CD4-positive, alpha-beta T cell (primary cell): ENCODE measurements at regions of chr2 and their contacts with region 1.

Region 1: GRCh38 chr2:241865957-241866789 is 3.4 kb upstream of the RTP5 start:
- DNase-seq: peak in 1 of 14 experiments; percentile 51
- ATAC-seq: no peak
- H3K4me3 ChIP-seq: no peak overlapping the region
- H3K4me3 Mint-ChIP-seq: no peak overlapping the region
- H3K27ac ChIP-seq: no peak overlapping the region
- H3K27ac Mint-ChIP-seq: no peak overlapping the region
- H3K4me1 ChIP-seq: peaks cover 93% of the 10 kb centered on the region
- H3K4me1 Mint-ChIP-seq: peaks cover 67% of the 10 kb centered on the region
- H3K27me3 ChIP-seq: peaks cover 0 to 6% of the 10 kb centered on the region in 2 experiments
- H3K27me3 Mint-ChIP-seq: peaks cover 37% of the 10 kb centered on the region
- CTCF ChIP-seq: no peak

Region 2: DNA sequence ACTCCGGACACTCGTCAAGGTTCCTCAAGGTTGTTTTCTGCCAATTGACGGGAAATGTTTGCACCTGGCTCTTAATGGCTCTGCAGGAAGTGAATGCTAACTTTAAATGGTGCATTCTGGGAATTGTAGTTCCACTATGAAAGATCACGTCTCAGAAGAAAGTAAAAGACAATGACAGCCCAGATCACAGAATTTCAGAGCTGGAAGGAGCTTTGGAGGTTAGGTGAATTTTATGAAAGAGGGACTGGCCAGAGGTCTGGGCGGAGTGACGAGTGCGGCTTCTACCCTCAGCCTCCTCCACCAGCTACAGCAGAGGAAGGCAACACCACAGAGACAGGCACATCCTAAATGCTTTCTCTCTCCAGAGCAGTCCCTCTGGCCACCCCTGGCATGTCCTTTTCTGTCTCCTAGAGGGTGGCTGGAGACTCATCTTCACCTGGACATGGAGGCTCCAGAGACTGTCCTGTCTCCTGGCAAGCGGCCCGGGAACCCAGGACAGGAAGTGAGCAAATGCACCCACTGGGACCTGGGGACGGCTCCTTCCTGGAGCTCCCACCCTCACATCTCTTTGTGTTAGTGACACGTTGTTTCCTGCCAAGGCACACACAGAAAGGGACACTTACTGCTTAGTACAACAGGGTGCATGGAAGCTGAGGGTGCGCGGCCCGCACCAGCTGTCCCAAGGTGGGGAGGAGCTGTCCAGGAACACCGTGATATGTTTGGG is 248.6 kb before region 1 on chr2:
- CTCF ChIA-PET with region 1: no interaction called
- POLR2A ChIA-PET with region 1: no interaction called
- intact Hi-C with region 1: no loop called
- DNase-seq: peak in 8 of 14 experiments; percentile 17 to 81 (median 44)
- ATAC-seq: peak; percentile 84
- H3K4me3 ChIP-seq: peak overlapping the region; percentile 61
- H3K4me3 Mint-ChIP-seq: peak overlapping the region; percentile 88
- H3K27ac ChIP-seq: peak overlapping the region; percentile 58 to 75
- H3K27ac Mint-ChIP-seq: peak overlapping the region; percentile 77
- H3K4me1 ChIP-seq: peaks cover 26% of the 10 kb centered on the region
- H3K4me1 Mint-ChIP-seq: peaks cover 30% of the 10 kb centered on the region
- H3K27me3 ChIP-seq: no peaks in the 10 kb centered on the region
- H3K27me3 Mint-ChIP-seq: no peaks in the 10 kb centered on the region
- CTCF ChIP-seq: no peak

Region 3: GRCh38 chr2:241649404-241649803 is 216.8 kb before region 1 on chr2:
- CTCF ChIA-PET with region 1: no interaction called
- POLR2A ChIA-PET with region 1: no interaction called
- intact Hi-C with region 1: no loop called
- DNase-seq: no peak
- ATAC-seq: no peak
- H3K4me3 ChIP-seq: no peak overlapping the region
- H3K4me3 Mint-ChIP-seq: no peak overlapping the region
- H3K27ac ChIP-seq: no peak overlapping the region
- H3K27ac Mint-ChIP-seq: no peak overlapping the region
- H3K4me1 ChIP-seq: peaks cover 8% of the 10 kb centered on the region
- H3K4me1 Mint-ChIP-seq: peaks cover 15% of the 10 kb centered on the region
- H3K27me3 ChIP-seq: no peaks in the 10 kb centered on the region
- H3K27me3 Mint-ChIP-seq: no peaks in the 10 kb centered on the region
- CTCF ChIP-seq: no peak

Region 4: GRCh38 chr2:241833101-241833663 is 33.0 kb before region 1 on chr2:
- CTCF ChIA-PET with region 1: no interaction called
- POLR2A ChIA-PET with region 1: no interaction called
- intact Hi-C with region 1: loop called in 1 of 2 experiments (anchors 5 kb)
- DNase-seq: no peak
- ATAC-seq: no peak
- H3K4me3 ChIP-seq: no peak overlapping the region
- H3K4me3 Mint-ChIP-seq: no peak overlapping the region
- H3K27ac ChIP-seq: no peak overlapping the region
- H3K27ac Mint-ChIP-seq: no peak overlapping the region
- H3K4me1 ChIP-seq: no peaks in the 10 kb centered on the region
- H3K4me1 Mint-ChIP-seq: no peaks in the 10 kb centered on the region
- H3K27me3 ChIP-seq: no peaks in the 10 kb centered on the region
- H3K27me3 Mint-ChIP-seq: no peaks in the 10 kb centered on the region
- CTCF ChIP-seq: no peak